Activated T-helper 1 cell treated with anti-CD3 and anti-CD28 coated beads, Interleukin-12 subunit alpha, Interleukin-12 subunit beta, Interleukin-2, Interleukin-4 antibody, amounts not matched to agents 30 ng/mL and 10 ng/mL and 1 ng/mL, durations not matched to agents 14 hours and 24 hours and 36 hours (primary cell): ENCODE measurements at regions of chr6 and their contacts with region 1.

Region 1: GRCh38 chr6:11343963-11344747 is 111.7 kb upstream of the NEDD9 start:
- DNase-seq: no peak
- H3K4me3 Mint-ChIP-seq: peak overlapping the region; percentile 4
- H3K27ac Mint-ChIP-seq: peak overlapping the region; percentile 61
- H3K4me1 Mint-ChIP-seq: peaks cover 90% of the 10 kb centered on the region
- H3K27me3 Mint-ChIP-seq: no peaks in the 10 kb centered on the region

Region 2: DNA sequence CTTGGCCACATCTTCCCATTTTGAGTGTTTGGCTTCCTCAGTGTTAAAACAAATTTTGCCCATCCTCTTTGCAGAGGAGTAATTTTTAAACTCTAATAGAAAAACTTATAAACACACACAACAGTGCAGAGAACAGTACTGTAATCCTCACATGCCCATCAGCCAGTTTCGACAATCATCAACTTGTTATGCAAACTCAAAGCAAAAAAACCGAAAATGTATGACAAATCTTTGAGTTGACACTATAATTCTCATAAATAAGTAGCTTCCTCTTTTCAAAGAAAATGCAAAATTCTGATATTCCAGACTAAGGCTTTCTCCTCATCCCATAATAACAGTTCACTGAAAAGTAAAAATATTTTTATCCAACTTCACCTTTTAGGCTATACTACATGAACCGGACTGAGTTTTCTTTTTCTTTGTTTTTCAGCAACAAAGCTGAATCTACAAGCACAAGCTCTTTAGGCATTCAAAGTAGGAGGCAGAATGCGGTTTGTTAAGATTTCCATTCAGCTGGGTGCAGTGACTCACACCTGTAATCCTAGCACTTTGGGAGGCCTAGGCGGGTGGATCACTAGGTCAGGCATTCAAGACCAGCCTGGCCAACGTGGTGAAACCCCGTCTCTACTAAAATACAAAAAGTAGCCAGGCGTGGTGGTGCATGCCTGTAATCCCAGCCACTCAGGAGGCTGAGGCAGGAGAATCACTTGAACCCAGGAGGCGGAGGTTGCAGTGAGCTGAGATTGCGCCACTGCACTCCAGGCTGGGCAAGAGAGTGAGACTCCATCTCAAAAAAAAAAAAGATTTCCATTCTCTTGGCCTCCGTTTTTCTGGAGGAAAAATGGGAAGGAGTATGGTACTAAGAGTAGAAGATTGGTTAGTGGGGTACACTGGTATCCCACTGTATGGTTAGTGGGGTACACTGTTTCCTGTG is 748.2 kb before region 1 on chr6:
- intact Hi-C with region 1: no loop called
- DNase-seq: no peak
- H3K4me3 Mint-ChIP-seq: no peak overlapping the region
- H3K27ac Mint-ChIP-seq: no peak overlapping the region
- H3K4me1 Mint-ChIP-seq: peaks cover 6% of the 10 kb centered on the region
- H3K27me3 Mint-ChIP-seq: no peaks in the 10 kb centered on the region

Region 3: DNA sequence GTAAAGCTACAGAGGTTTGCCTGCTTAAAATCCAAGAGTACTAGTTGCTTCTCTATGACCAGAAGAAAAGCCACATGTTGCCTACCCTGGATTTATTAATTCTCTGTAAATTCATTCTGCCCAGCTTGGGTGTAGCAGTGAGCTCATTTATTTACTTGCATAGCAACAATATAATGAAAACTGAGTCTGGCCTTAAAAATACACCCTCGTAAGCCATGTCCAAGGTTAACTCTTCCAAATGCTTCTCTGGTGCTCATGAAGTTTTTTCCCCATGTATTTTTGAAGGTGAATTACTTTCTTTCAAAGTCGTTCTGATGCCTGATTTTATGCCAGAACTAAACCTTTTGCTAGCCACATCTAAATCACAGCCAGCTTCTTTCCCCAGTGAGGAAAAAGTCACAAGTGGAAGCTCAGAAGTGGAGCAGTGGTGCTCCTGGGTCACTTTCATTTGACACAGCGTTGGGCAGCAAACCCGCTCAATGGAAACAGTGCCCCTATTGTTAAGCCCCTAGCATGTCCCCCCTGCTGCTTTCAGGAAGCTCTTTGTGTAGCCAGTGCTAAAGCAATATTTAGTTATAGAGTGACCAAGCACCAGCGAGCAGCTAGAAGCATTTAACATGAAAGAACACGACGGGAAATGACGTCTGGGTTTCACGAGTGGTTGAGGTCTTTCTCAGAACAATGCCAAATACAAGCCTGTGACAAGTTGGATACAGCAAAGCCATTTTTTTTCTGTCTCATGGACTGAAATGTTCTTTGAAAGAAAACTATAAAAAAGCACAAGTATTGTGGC is 141.4 kb before region 1 on chr6:
- intact Hi-C with region 1: loop called (anchors 1 kb)
- DNase-seq: peak; percentile 43
- H3K4me3 Mint-ChIP-seq: peak overlapping the region; percentile 54
- H3K27ac Mint-ChIP-seq: peak overlapping the region; percentile 92
- H3K4me1 Mint-ChIP-seq: peaks cover 86% of the 10 kb centered on the region
- H3K27me3 Mint-ChIP-seq: no peaks in the 10 kb centered on the region

Region 4: DNA sequence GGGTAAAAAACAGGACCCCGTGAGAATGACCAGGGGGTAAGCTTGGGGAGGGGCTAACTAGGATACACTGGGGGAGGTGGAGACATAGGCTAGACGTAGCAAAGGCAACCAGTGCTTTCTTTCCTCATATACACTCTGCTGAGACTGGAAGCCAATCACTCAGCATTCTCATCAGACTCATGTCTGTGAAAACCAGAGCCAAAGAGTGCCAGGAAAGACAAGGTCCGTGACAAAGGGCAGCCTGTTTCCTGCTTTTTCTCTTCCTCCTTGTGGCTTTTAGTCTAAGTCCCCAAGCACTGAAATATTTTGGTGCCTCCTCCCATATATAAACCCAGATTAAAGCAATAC is 13.8 kb before region 1 on chr6:
- intact Hi-C with region 1: loop called (anchors 1 kb)
- DNase-seq: no peak
- H3K4me3 Mint-ChIP-seq: peak overlapping the region; percentile 51
- H3K27ac Mint-ChIP-seq: peak overlapping the region; percentile 91
- H3K4me1 Mint-ChIP-seq: peaks cover 84% of the 10 kb centered on the region
- H3K27me3 Mint-ChIP-seq: no peaks in the 10 kb centered on the region

Region 5: GRCh38 chr6:11374036-11375010 is 30.2 kb after region 1 on chr6:
- intact Hi-C with region 1: loop called (anchors 1 kb)
- DNase-seq: no peak
- H3K4me3 Mint-ChIP-seq: peak overlapping the region; percentile 65
- H3K27ac Mint-ChIP-seq: peak overlapping the region; percentile 94
- H3K4me1 Mint-ChIP-seq: peaks cover 72% of the 10 kb centered on the region
- H3K27me3 Mint-ChIP-seq: no peaks in the 10 kb centered on the region

Region 6: DNA sequence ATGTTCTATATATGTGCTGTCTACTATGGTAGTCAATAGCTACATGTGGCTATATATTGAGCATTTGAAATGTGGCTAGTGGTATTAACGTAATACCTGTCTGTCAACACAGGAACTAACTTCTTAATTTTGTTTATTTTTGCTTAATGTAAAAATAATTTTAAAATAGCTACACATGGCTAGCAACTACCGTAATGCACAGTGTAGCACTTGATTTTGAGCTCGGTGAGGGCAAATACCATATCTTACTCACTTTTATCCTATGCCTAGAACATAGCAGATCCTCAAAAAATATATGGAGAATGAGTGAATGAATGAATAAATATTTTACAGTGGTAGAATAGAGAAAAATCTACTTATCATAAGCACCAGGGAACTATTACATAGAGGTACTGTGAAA is 165.3 kb after region 1 on chr6:
- intact Hi-C with region 1: no loop called
- DNase-seq: no peak
- H3K4me3 Mint-ChIP-seq: no peak overlapping the region
- H3K27ac Mint-ChIP-seq: no peak overlapping the region
- H3K4me1 Mint-ChIP-seq: no peaks in the 10 kb centered on the region
- H3K27me3 Mint-ChIP-seq: peaks cover 15% of the 10 kb centered on the region